Endothelial cell of umbilical vein (primary cell): ENCODE measurements at regions of chr2 and their contacts with region 1.

Region 1: GRCh38 chr2:155377266-155377680 is 678.8 kb downstream of the KCNJ3 start:
- DNase-seq: peak; percentile 75
- H3K4me3 ChIP-seq: peak overlapping the region in 1 of 3 experiments; percentile 40
- H3K27ac ChIP-seq: peak overlapping the region; percentile 43
- H3K4me1 ChIP-seq: peaks cover 19% of the 10 kb centered on the region
- H3K27me3 ChIP-seq: no peaks in the 10 kb centered on the region
- CTCF ChIP-seq: peak; percentile 12 to 24
- POLR2A ChIP-seq: no peak

Region 2: GRCh38 chr2:155599834-155600233 is 222.6 kb after region 1 on chr2:
- CTCF ChIA-PET with region 1: no interaction called
- POLR2A ChIA-PET with region 1: no interaction called
- dilution Hi-C with region 1: no loop called
- intact Hi-C with region 1: no loop called
- DNase-seq: no peak
- H3K4me3 ChIP-seq: no peak overlapping the region
- H3K27ac ChIP-seq: no peak overlapping the region
- H3K4me1 ChIP-seq: no peaks in the 10 kb centered on the region
- H3K27me3 ChIP-seq: no peaks in the 10 kb centered on the region
- CTCF ChIP-seq: no peak
- POLR2A ChIP-seq: no peak

Region 3: GRCh38 chr2:155815886-155816285 is 438.6 kb after region 1 on chr2:
- CTCF ChIA-PET with region 1: interaction called, 238 read pairs
- POLR2A ChIA-PET with region 1: interaction called, 3 read pairs
- dilution Hi-C with region 1: no loop called
- intact Hi-C with region 1: loop called (anchors 1 kb)
- DNase-seq: peak; percentile 67
- H3K4me3 ChIP-seq: no peak overlapping the region
- H3K27ac ChIP-seq: no peak overlapping the region
- H3K4me1 ChIP-seq: no peaks in the 10 kb centered on the region
- H3K27me3 ChIP-seq: no peaks in the 10 kb centered on the region
- CTCF ChIP-seq: peak; percentile 45 to 69
- POLR2A ChIP-seq: no peak

Region 4: GRCh38 chr2:156341452-156342253 is 964.4 kb after region 1 on chr2:
- CTCF ChIA-PET with region 1: interaction called, 11 read pairs
- POLR2A ChIA-PET with region 1: no interaction called
- dilution Hi-C with region 1: no loop called
- intact Hi-C with region 1: no loop called
- DNase-seq: peak; percentile 83
- H3K4me3 ChIP-seq: peak overlapping the region; percentile 69 to 97 (median 87)
- H3K27ac ChIP-seq: peak overlapping the region; percentile 100
- H3K4me1 ChIP-seq: peaks cover 11% of the 10 kb centered on the region
- H3K27me3 ChIP-seq: no peaks in the 10 kb centered on the region
- CTCF ChIP-seq: no peak
- POLR2A ChIP-seq: peak; percentile 35

Region 5: GRCh38 chr2:156589381-156590079 is 1212.3 kb after region 1 on chr2:
- CTCF ChIA-PET with region 1: interaction called, 118 read pairs
- POLR2A ChIA-PET with region 1: no interaction called
- dilution Hi-C with region 1: no loop called
- intact Hi-C with region 1: loop called (anchors 1 kb)
- DNase-seq: peak; percentile 60
- H3K4me3 ChIP-seq: no peak overlapping the region
- H3K27ac ChIP-seq: no peak overlapping the region
- H3K4me1 ChIP-seq: no peaks in the 10 kb centered on the region
- H3K27me3 ChIP-seq: no peaks in the 10 kb centered on the region
- CTCF ChIP-seq: peak; percentile 19 to 40
- POLR2A ChIP-seq: no peak

Region 6: DNA sequence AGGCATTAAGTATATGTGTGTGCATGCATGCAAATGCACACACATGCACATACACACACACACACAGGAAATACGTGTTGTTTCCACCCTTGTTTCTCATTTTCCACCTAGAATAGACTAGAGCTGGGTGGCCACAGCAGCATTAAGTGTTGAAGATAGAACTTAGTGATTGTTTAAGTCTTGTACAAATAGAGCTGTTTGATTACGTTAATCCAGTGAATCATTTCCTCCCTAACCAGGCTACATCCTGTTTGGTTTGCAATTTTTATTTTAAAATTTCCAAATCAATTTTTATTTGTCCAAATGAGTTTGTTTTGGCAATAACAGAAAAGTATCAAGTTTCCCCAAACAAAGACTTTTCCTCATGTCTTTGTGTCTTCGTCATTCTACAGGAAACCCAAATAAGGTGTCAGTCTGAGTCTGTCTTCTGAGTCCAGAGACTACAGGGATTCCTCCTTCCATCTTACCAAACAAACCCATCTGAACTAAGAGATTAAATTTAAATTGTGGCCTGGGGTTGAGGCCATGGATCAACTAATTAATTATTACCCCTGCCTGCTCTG is 1805.6 kb after region 1 on chr2:
- CTCF ChIA-PET with region 1: interaction called, 12 read pairs
- POLR2A ChIA-PET with region 1: interaction called, 4 read pairs
- dilution Hi-C with region 1: no loop called
- intact Hi-C with region 1: no loop called
- DNase-seq: peak; percentile 94
- H3K4me3 ChIP-seq: no peak overlapping the region
- H3K27ac ChIP-seq: peak overlapping the region; percentile 97
- H3K4me1 ChIP-seq: peaks cover 20% of the 10 kb centered on the region
- H3K27me3 ChIP-seq: no peaks in the 10 kb centered on the region
- CTCF ChIP-seq: no peak
- POLR2A ChIP-seq: peak; percentile 44

Region 7: GRCh38 chr2:157336137-157337010 is 1959.1 kb after region 1 on chr2:
- CTCF ChIA-PET with region 1: interaction called, 69 read pairs
- POLR2A ChIA-PET with region 1: no interaction called
- dilution Hi-C with region 1: no loop called
- intact Hi-C with region 1: no loop called
- DNase-seq: peak; percentile 31
- H3K4me3 ChIP-seq: no peak overlapping the region
- H3K27ac ChIP-seq: no peak overlapping the region
- H3K4me1 ChIP-seq: no peaks in the 10 kb centered on the region
- H3K27me3 ChIP-seq: no peaks in the 10 kb centered on the region
- CTCF ChIP-seq: peak; percentile 53 to 74
- POLR2A ChIP-seq: no peak